GM13976 (cell line): ENCODE measurements at regions of chr12 and their contacts with region 1.

Region 1: GRCh38 chr12:56468216-56469006 is at the start of gene SPRYD4:
- DNase-seq: peak; percentile 96
- CTCF ChIP-seq: peak; percentile 64

Region 2: GRCh38 chr12:55874443-55874842 is 594.0 kb before region 1 on chr12:
- in situ Hi-C with region 1: no loop called
- DNase-seq: no peak
- CTCF ChIP-seq: no peak

Region 3: DNA sequence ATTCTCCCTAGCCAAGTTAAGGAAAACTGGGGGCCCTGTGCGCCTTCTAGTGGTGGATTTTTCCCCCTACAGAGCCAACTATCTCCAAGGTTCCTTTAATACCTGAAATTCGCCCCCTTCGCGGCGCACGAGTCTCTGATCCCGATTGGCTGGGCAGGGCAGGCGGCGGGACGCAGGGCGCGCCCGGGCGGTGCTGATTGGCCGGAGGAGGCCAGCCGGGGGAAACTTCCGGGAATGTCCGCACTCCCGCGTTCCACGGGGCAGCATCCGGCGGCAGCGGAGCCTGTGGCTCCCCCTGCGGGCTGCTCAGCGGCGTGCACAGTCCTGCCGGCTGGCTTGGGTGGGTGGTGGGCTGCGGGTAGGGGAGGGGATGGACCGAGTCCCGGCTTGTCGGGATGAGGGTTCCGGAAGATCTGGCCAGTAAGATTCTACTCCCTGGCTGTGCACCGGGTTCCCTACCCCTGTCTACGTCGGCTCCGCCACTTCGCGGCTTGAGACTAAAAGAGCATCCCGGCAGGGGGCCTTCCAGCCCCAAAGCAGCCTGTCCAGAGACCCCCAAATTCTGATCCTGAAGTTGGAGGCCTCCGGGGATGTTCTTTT is 244.2 kb before region 1 on chr12 and contains the start of gene NABP2:
- in situ Hi-C with region 1: loop called (anchors 25 kb)
- DNase-seq: peak; percentile 99
- CTCF ChIP-seq: peak; percentile 98

Region 4: DNA sequence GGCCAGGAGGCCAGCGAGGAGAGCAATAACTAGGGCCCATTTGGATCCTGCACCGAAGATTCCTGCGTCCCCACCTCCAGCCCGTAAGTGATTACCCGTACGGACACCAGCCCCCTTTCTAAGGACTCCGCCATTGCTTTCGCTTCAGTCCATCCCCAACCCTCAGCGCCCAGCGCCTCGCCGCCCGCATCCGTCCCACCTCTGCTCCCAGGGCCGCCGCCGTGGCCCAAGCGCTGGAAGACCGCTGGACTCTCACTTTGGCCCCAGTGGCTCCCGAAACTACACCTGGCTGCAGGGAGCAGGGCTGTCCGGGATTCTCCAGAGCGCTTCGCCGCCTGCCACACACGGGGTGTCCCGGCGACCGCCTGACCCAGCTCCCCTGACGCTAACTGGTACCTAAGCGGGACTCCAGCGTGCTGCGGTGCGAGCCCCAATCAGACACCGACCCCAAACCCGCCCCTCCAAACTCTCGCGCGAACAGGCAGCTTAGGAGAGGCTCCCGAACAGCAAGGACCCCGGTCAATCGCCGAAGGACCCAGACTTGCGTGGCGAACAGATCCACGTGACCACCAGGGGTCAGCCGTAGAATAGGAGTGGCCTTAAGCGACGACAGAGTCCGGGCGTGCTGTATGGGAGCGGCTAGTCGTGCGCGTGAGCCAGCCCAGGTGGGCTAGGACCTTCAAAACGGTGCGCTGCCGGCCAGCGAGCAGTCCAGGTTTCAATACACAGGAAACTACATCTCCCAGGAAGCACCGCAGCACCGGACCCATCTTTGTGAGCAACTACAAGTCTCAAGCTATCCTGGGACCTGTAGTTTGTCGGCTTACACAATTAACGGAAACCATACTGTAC is 152.6 kb before region 1 on chr12 and contains the start of gene CNPY2:
- in situ Hi-C with region 1: loop called (anchors 10 kb)
- DNase-seq: peak; percentile 96
- CTCF ChIP-seq: peak; percentile 26

Region 5: GRCh38 chr12:56616925-56617324 is 148.5 kb after region 1 on chr12:
- in situ Hi-C with region 1: no loop called
- DNase-seq: no peak
- CTCF ChIP-seq: no peak

Region 6: GRCh38 chr12:56766535-56766934 is 298.1 kb after region 1 on chr12:
- in situ Hi-C with region 1: no loop called
- DNase-seq: peak; percentile 78
- CTCF ChIP-seq: no peak